Mammary epithelial cell (primary cell): ENCODE measurements at regions of chr22 and their contacts with region 1.

Region 1: GRCh38 chr22:42444077-42444904 is 12.1 kb upstream of the NFAM1 start:
- DNase-seq: peak; percentile 84
- H3K4me3 ChIP-seq: peak overlapping the region in 2 of 3 experiments; percentile 10 to 30
- H3K27ac ChIP-seq: no peak overlapping the region
- H3K4me1 ChIP-seq: peaks cover 22% of the 10 kb centered on the region
- H3K27me3 ChIP-seq: no peaks in the 10 kb centered on the region
- CTCF ChIP-seq: peak; percentile 52 to 70

Region 2: DNA sequence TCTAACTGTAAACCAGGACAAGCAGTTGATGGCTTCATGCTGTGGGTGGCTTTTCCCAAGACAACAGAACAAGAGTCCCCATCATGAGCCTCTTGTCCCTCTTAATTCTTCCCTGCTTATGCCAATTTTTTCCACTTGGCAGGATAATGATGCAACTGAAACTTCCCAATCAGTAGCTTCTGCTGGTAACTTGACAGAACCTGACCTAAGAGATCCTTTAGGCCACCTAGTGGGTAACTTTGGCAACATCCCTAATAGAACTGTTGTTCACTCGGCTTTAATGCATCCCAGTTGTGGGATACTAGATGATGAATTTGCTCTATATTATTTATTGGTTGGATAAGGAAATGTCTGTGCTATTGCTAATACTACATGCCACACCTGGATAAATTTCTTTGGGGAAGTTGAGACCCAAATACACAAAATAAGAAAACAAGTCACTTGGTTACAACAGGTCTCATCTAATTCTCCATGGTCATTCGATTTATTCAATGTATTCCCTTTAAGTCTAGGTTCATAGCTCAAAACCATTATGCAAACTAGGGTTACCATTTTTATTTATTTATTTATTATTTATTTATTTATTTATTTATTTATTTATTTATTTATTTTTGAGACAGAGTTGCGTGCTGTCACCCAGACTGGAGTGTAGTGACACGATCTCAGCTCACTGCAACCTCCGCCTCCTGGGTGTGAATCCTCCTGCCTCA is 29.3 kb after region 1 on chr22:
- CTCF ChIA-PET with region 1: interaction called, 14 read pairs
- dilution Hi-C with region 1: no loop called
- in situ Hi-C with region 1: no loop called
- intact Hi-C with region 1: no loop called
- DNase-seq: peak; percentile 53
- H3K4me3 ChIP-seq: no peak overlapping the region
- H3K27ac ChIP-seq: no peak overlapping the region
- H3K4me1 ChIP-seq: no peaks in the 10 kb centered on the region
- H3K27me3 ChIP-seq: no peaks in the 10 kb centered on the region
- CTCF ChIP-seq: peak; percentile 71 to 83